Ascending aorta (tissue), 2 donors: ENCODE measurements at regions of chr1 and their contacts with region 1.

Region 1: DNA sequence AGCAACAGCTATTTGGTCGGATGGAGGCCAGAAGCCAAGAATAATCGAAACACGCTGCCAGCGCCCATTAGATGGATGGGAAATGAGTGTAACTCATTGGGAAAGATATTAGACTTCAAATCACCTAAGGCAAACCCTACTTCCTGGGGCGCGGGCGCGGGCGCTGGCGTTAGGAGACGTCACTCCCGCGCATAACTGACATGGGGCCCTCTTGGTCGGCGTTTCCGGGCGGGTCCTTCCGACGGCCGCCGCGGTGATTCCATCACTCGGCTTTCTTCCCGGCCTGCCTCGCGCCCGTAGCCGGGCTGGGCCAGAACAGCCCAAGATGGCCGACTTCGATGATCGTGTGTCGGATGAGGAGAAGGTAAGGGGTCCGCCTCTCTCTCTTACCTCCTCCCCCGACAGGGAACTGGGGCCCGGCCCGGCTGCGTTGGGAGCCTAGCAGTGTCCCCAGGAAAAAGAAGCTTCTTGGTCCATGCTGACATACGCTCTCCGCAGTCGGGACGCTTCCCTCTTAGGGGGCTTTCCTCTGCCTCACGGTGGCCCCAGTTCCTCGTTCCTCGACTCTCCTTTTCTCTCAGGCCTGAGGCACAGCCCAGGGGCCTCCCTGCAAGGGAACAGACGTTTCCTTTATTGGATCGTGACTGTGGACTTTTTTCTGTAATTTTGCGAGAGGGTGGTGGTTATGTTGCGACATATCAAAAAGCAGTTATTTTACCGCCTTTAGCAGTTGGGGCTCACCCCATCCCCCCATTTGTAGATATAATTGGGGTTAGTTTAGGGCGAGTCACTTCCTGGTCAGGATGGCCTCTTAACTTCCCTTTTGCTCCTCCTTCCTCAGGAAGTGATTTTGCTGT is at the start of gene CAPZA1:
- DNase-seq: peak; percentile 72 to 95
- H3K4me3 ChIP-seq: peak within 1 kb of the TSS; percentile 83 to 84
- H3K27ac ChIP-seq: peak within 1 kb of the TSS; percentile 96 to 100
- H3K4me1 ChIP-seq: peaks cover 5 to 22% of the 10 kb centered on the region in 2 donors
- H3K27me3 ChIP-seq: no peaks in the 10 kb centered on the region
- CTCF ChIP-seq: no peak
- total RNA-seq, gene CAPZA1: 53.5 TPM

Region 2: GRCh38 chr1:112390775-112391602 is 228.8 kb before region 1 on chr1:
- intact Hi-C with region 1: loop called (anchors 2 kb)
- DNase-seq: peak; percentile 71 to 97
- H3K4me3 ChIP-seq: peak overlapping the region; percentile 48 to 64
- H3K27ac ChIP-seq: peak overlapping the region; percentile 92 to 98
- H3K4me1 ChIP-seq: peaks cover 8 to 45% of the 10 kb centered on the region in 2 donors
- H3K27me3 ChIP-seq: no peaks in the 10 kb centered on the region
- CTCF ChIP-seq: peak; percentile 90 to 96 (median 91)

Region 3: GRCh38 chr1:112444269-112444668 is 175.5 kb before region 1 on chr1:
- intact Hi-C with region 1: no loop called
- DNase-seq: no peak
- H3K4me3 ChIP-seq: no peak overlapping the region
- H3K27ac ChIP-seq: peak overlapping the region in 1 of 2 donors; percentile 18
- H3K4me1 ChIP-seq: peaks cover 0 to 12% of the 10 kb centered on the region in 2 donors
- H3K27me3 ChIP-seq: no peaks in the 10 kb centered on the region
- CTCF ChIP-seq: no peak

Region 4: GRCh38 chr1:112501810-112502641 is 117.7 kb before region 1 on chr1:
- intact Hi-C with region 1: loop called (anchors 5 kb)
- DNase-seq: peak in 1 of 2 donors; percentile 81
- H3K4me3 ChIP-seq: peak overlapping the region; percentile 63 to 74
- H3K27ac ChIP-seq: peak overlapping the region in 1 of 2 donors; percentile 29
- H3K4me1 ChIP-seq: no peaks in the 10 kb centered on the region
- H3K27me3 ChIP-seq: no peaks in the 10 kb centered on the region
- CTCF ChIP-seq: peak; percentile 67 to 87 (median 71)

Region 5: DNA sequence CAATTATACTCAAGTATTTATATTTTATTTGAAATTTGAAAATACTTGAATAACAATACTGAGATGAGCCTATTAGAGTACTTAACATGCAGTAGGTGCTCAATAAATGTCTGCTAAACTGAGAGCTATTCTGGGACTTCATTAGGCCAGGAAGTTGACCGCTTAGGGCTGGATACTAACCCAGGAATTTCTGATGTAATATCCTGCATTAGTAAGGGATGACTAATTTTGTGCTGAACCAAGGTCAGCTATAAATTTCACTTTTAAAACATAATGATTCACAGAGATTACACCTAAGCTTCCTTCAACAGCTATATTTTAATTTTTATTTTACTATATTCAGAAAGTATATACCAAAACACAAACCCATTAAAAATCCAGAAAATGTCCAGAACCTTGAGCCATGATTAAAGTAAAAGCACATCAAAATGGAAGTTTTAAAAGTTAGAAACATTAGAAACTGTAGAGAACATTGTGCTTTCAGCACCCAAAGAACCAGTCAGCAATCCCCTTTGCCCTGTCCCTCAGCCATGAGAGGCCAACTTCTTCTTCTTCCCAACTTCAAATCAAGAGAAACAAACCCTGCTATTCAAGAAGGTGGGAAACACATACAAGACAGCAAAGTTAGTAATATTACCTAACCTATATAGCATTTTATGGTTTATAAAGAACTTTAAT is 75.6 kb before region 1 on chr1:
- intact Hi-C with region 1: loop called (anchors 5 kb)
- DNase-seq: no peak
- H3K4me3 ChIP-seq: no peak overlapping the region
- H3K27ac ChIP-seq: peak overlapping the region; percentile 79 to 86
- H3K4me1 ChIP-seq: peaks cover 0 to 18% of the 10 kb centered on the region in 2 donors
- H3K27me3 ChIP-seq: no peaks in the 10 kb centered on the region
- CTCF ChIP-seq: no peak

Region 6: DNA sequence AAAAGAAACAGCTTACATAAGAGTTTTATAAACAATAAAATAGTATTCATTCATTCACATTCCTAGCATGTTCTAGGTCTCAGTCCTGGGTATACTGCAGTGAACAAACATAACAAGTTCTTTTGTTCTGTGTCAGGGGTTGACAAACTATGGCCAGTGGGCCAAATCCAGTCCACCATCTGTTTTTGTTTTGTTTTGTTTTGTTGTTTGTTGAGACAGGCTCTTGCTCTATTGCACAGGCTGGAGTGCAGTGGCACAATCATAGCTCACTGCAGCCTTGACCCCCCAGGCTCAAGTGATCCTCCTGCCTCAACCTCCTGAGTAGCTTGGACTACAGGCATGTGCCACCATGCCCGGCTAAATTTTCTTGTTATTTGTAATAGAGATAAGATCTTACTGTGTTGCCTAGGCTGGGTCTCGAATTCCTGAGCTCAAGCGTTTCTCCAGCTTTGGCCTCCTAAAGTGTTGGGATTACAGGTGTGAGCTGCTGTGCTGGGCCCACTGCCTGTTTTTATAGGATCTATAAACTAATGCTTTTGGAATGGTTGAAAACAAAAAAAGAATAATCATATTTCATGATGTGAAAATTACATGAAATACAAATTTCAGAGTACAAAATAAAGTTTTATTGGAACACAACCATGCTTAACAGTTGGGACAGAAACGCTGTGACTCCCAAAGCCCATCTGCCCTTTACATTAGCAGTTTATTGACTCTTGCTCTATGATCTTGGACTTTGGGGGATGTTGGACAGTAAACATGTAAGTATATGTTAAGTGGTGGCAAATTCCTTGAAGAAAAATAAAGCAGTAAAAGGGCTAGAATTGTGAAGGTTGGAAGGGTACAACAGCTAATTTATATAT is 17.7 kb after region 1 on chr1:
- intact Hi-C with region 1: no loop called
- DNase-seq: no peak
- H3K4me3 ChIP-seq: no peak overlapping the region
- H3K27ac ChIP-seq: no peak overlapping the region
- H3K4me1 ChIP-seq: peaks cover 0 to 10% of the 10 kb centered on the region in 2 donors
- H3K27me3 ChIP-seq: no peaks in the 10 kb centered on the region
- CTCF ChIP-seq: no peak

Region 7: GRCh38 chr1:112674439-112674985 is 54.8 kb after region 1 on chr1 and contains the start of gene MOV10:
- intact Hi-C with region 1: loop called (anchors 2 kb)
- DNase-seq: peak in 1 of 2 donors; percentile 84
- H3K4me3 ChIP-seq: peak within 1 kb of the TSS; percentile 90 to 99
- H3K27ac ChIP-seq: peak within 1 kb of the TSS; percentile 85 to 89
- H3K4me1 ChIP-seq: peaks cover 0 to 17% of the 10 kb centered on the region in 2 donors
- H3K27me3 ChIP-seq: no peaks in the 10 kb centered on the region
- CTCF ChIP-seq: no peak
- total RNA-seq, gene MOV10: 69.5 TPM

Region 8: GRCh38 chr1:112700290-112701226 is 80.8 kb after region 1 on chr1:
- intact Hi-C with region 1: no loop called
- DNase-seq: peak; percentile 93 to 99
- H3K4me3 ChIP-seq: peak overlapping the region in 1 of 2 donors; percentile 11
- H3K27ac ChIP-seq: peak overlapping the region; percentile 99
- H3K4me1 ChIP-seq: peaks cover 27 to 45% of the 10 kb centered on the region in 2 donors
- H3K27me3 ChIP-seq: no peaks in the 10 kb centered on the region
- CTCF ChIP-seq: no peak

Region 9: DNA sequence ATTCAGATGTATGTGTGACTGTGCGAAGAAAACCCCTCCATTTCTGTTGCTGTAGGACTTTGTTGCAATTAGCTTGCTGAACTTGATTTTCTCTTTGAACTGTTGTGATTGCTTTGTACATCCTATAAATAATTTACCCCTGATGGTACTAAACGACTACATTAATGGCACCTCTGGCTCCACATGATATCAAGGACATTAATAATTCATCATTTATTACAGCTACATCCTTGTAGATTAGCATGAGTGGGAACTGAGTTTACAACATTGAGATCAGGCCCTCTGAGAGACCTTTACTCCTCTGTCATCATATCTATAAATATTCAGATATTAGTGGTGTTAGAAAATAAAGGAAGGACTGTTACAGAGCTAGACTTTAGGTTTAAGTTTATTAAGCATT is 466.8 kb after region 1 on chr1:
- intact Hi-C with region 1: no loop called
- DNase-seq: no peak
- H3K4me3 ChIP-seq: no peak overlapping the region
- H3K27ac ChIP-seq: no peak overlapping the region
- H3K4me1 ChIP-seq: peaks cover 0 to 3% of the 10 kb centered on the region in 2 donors
- H3K27me3 ChIP-seq: no peaks in the 10 kb centered on the region
- CTCF ChIP-seq: no peak